H1 (cell line): ENCODE measurements at regions of chr11 and their contacts with region 1.

Region 1: DNA sequence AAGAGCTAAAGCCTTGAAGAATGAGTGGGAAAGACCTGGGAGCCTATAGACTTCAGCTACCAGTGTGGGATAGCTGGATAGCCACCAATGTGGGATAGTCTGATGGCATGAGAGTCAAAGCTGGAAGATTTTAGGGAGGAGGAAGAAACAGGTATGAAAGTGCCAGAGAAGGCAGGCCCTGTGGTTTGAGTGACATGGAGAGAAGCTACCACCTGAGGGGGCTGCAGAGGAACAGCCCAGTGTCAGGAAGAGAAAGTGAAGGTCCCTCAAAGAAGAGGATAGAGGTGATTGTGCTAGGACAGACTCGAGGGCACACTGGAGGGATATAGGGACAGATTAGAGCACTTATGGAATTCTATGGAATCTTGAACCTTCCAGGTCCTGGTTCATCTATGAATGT is 23.1 kb upstream of the PAX6 start:
- DNase-seq: no peak
- H3K4me3 ChIP-seq: no peak overlapping the region
- H3K27ac ChIP-seq: no peak overlapping the region
- H3K4me1 ChIP-seq: peaks cover 0 to 2% (median 0%) of the 10 kb centered on the region in 4 experiments; a peak in 2 of 7 replicates
- H3K27me3 ChIP-seq: peaks cover 0 to 2% (median under 1%) of the 10 kb centered on the region in 4 experiments; a peak in 2 of 7 replicates
- CTCF ChIP-seq: peak; percentile 47 to 62 (median 59)
- EP300 ChIP-seq: no peak
- POLR2A ChIP-seq: no peak
- RAD21 ChIP-seq: peak; percentile 56 to 64

Region 2: GRCh38 chr11:31671681-31672080 is 162.6 kb before region 1 on chr11:
- CTCF ChIA-PET with region 1: no interaction called
- POLR2A ChIA-PET with region 1: no interaction called
- DNase-seq: no peak
- H3K4me3 ChIP-seq: no peak overlapping the region
- H3K27ac ChIP-seq: no peak overlapping the region
- H3K4me1 ChIP-seq: no peaks in the 10 kb centered on the region
- H3K27me3 ChIP-seq: peaks cover 0 to 1% (median 0%) of the 10 kb centered on the region in 4 experiments; a peak in 1 of 7 replicates
- CTCF ChIP-seq: no peak
- EP300 ChIP-seq: no peak
- POLR2A ChIP-seq: no peak
- RAD21 ChIP-seq: no peak

Region 3: DNA sequence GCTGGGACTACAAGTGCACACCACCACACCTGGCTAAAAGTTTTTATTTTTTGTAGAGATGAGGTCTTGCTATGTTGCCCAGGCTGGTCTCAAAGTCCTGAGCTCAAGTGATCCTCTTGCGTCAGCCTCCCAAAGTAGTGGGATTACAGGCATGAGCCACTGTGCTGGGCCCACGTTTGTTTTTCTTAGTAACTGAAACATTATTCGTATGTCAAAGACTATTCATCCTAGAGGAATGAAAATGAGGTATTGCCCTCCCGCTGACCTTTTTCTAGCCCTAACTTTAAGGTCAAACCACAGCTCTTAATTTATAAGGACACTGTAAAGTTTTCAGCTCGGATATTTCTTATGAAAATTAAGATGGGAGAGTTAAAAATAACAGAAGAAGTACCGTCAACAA is 10.1 kb after region 1 on chr11:
- CTCF ChIA-PET with region 1: interaction called, 10 read pairs
- POLR2A ChIA-PET with region 1: no interaction called
- DNase-seq: no peak
- H3K4me3 ChIP-seq: no peak overlapping the region
- H3K27ac ChIP-seq: no peak overlapping the region
- H3K4me1 ChIP-seq: peaks cover 0 to 5% (median 1%) of the 10 kb centered on the region in 4 experiments; a peak in 2 of 7 replicates
- H3K27me3 ChIP-seq: no peaks in the 10 kb centered on the region
- CTCF ChIP-seq: no peak
- EP300 ChIP-seq: no peak
- POLR2A ChIP-seq: no peak
- RAD21 ChIP-seq: no peak

Region 4: DNA sequence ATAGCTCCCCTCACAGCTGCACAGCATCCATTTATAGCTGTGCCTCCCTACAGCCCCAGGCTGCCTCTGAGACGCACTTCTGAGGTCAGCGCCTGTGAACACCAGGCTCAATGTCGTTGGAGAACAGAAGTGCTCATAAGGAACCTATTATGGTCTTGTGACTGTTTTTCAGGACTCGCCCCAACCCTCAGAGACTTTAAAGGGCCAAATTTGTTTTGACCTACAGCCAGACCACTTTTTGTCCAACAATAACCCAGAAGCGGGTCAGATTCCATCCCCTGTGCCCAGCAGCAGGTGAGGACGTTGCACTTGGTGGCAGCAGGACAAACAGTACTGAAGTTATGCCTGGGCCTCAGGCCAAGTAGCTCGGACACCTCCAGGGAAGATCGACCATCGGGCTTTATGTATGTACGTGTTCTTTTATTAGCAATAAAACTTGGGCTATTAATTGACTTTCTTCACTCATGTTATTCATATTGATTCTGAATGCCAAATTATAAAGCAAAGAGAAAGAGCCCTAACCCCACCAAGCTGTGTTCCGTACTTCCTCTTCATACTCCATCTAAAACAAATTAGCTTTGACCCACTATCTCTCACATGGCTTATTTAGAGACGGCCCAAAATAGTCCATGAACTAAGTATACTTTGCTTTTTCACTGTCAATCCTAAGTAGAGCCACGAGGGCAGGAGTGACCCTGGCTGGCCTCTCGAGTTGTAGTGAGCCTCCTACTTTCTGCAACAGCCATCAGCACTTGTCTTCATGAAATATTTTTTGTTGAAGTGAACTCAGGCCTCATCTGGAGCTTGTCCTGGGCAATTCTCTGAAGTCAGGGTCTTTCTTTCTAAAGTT is 69.2 kb after region 1 on chr11:
- CTCF ChIA-PET with region 1: no interaction called
- POLR2A ChIA-PET with region 1: no interaction called
- DNase-seq: no peak
- H3K4me3 ChIP-seq: no peak overlapping the region
- H3K27ac ChIP-seq: no peak overlapping the region
- H3K4me1 ChIP-seq: peaks cover 0 to 3% (median 0%) of the 10 kb centered on the region in 4 experiments; a peak in 1 of 7 replicates
- H3K27me3 ChIP-seq: no peaks in the 10 kb centered on the region
- CTCF ChIP-seq: no peak
- EP300 ChIP-seq: no peak
- POLR2A ChIP-seq: no peak
- RAD21 ChIP-seq: no peak